ENCODE measurements at regions of chr7 and their contacts with region 1.

Region 1: DNA sequence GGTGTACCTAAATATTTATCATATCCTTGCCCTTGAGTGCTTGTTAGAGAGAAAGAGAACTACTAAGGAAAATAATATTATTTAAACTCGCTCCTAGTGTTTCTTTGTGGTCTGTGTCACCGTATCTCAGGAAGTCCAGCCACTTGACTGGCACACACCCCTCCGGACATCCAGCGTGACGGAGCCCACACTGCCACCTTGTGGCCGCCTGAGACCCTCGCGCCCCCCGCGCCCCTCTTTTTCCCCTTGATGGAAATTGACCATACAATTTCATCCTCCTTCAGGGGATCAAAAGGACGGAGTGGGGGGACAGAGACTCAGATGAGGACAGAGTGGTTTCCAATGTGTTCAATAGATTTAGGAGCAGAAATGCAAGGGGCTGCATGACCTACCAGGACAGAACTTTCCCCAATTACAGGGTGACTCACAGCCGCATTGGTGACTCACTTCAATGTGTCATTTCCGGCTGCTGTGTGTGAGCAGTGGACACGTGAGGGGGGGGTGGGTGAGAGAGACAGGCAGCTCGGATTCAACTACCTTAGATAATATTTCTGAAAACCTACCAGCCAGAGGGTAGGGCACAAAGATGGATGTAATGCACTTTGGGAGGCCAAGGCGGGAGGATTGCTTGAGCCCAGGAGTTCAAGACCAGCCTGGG is 11.4 kb downstream of the SERPINE1 start:
- DNase-seq: peak; percentile 98
- ATAC-seq: peak; percentile 44
- H3K4me3 ChIP-seq: no peak overlapping the region
- H3K27ac ChIP-seq: peak overlapping the region; percentile 70
- H3K4me1 ChIP-seq: peaks cover 22% of the 10 kb centered on the region; the same call in 1 of the 2 replicates
- H3K27me3 ChIP-seq: no peaks in the 10 kb centered on the region
- CTCF ChIP-seq: peak; percentile 60
- POLR2A ChIP-seq: peak; percentile 77
- RAD21 ChIP-seq: peak; percentile 39; the same call in 1 of the 2 replicates

Region 2: DNA sequence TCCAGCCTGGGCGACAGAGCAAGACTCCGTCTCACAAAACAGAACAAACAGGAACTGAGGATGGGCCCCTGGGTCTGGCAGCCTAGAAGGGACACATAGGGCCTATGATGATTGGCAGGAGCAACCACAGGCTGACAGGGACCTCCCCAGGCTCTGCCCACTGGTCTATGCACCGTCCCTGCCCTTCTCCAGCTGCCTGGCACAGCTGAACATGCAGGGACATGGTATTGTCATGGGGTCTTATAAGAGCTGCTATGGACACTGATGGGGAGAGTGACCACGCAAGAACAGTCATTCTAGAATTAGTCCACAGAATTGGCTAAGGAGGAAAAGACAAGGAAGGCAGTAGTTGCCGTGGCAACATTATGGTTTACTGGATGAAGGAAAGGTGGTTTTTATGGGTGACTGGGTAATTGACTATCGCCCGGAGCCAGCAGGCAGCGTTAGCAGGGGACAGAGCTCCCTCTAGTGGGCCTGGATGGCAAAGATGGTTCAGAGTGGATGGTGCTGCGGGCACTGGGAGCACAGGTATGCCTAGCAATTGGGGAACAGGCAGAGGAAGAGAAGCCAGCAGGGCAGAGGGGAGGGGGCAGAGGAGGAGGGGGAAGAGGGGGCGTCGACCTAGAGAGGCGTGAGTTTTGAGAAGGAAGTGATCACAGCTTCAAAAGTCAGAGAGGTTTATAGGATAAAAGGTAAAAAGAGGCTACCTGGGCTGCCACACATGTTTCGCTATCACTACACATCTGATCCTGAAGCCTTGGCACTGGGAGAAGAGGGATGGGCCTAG is 60.8 kb before region 1 on chr7:
- CTCF ChIA-PET with region 1: no interaction called
- POLR2A ChIA-PET with region 1: no interaction called
- dilution Hi-C with region 1: no loop called
- in situ Hi-C with region 1: no loop called
- intact Hi-C with region 1: no loop called
- DNase-seq: peak; percentile 64
- ATAC-seq: peak; percentile 100
- H3K4me3 ChIP-seq: no peak overlapping the region
- H3K27ac ChIP-seq: no peak overlapping the region
- H3K4me1 ChIP-seq: no peaks in the 10 kb centered on the region
- H3K27me3 ChIP-seq: peaks cover 11% of the 10 kb centered on the region
- CTCF ChIP-seq: peak; percentile 88
- POLR2A ChIP-seq: no peak
- RAD21 ChIP-seq: peak; percentile 93

Region 3: DNA sequence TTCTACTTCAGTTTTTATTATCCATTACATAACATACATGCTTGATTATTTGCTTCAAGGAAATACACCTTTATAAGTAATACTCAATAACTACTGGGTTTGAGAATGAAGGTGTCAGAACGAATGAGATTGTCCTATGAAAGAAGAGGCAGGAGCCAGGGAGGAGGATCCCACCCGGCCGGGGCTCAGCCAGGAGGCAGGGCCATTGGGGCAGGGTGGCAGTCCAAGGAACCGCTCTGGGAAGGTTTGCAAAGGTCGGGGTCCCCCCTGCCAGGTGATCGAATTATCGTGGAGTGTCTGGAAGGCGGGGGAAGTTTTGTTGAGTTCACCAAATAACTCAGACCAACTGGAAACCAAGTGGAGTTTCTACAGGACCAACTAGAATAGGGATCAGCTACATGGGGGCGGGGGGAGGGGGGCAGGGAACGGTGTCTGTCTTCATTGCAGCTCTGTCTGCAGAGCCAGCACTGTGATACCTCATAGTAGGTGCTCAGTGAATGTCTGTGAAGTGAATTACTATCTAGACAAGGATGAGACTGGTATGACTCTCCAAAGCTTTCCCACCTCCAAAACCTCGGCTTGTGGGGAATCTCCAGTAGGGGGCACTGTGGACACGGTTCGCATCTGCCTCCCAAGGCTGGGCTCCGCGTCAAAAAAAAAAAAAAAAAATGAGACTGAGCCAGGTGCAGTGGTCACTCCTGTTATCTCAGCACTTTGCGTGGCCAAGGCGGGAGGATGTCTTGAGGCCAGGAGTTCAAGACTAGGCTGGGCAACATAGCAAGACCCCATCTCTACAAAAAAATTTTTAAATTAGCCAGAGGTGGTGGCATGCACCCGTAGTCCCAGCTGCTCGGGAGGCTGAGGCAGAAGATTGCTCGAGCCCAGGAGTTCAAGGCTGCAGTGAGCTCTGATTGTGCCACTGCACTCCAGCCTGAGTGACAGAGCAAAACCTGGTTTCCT is 43.6 kb before region 1 on chr7:
- CTCF ChIA-PET with region 1: interaction called, 8 read pairs
- POLR2A ChIA-PET with region 1: interaction called, 5 read pairs
- dilution Hi-C with region 1: no loop called
- in situ Hi-C with region 1: loop called (anchors 5 kb)
- intact Hi-C with region 1: loop called (anchors 1 kb)
- DNase-seq: peak; percentile 67
- ATAC-seq: peak; percentile 64
- H3K4me3 ChIP-seq: no peak overlapping the region
- H3K27ac ChIP-seq: peak overlapping the region; percentile 77
- H3K4me1 ChIP-seq: peaks cover 14% of the 10 kb centered on the region
- H3K27me3 ChIP-seq: no peaks in the 10 kb centered on the region
- CTCF ChIP-seq: peak; percentile 80
- POLR2A ChIP-seq: no peak
- RAD21 ChIP-seq: peak; percentile 76

Region 4: DNA sequence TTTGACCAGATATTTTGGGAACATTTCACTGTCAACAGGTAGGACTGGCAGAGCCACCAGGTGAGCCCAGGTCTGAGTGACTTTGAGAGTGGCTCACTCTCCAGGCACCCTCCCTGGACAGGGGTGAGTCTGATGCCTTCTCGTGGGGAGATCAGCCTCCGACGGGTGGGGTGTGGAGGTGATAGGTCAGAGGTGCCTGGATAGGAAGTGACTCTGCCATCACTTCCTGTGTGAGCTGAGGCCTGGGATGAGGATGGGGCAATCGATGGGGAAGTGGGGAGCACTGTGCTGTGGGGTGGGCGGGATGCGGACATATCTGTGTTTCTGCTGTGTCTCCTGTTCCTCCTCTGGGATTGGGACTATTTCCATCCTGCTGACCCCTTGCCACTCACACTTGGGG is 148.7 kb after region 1 on chr7:
- CTCF ChIA-PET with region 1: interaction called, 23 read pairs
- POLR2A ChIA-PET with region 1: no interaction called
- dilution Hi-C with region 1: no loop called
- in situ Hi-C with region 1: no loop called
- intact Hi-C with region 1: no loop called
- DNase-seq: no peak
- ATAC-seq: no peak
- H3K4me3 ChIP-seq: no peak overlapping the region
- H3K27ac ChIP-seq: no peak overlapping the region
- H3K4me1 ChIP-seq: no peaks in the 10 kb centered on the region
- H3K27me3 ChIP-seq: peaks cover 43% of the 10 kb centered on the region
- CTCF ChIP-seq: no peak
- POLR2A ChIP-seq: no peak
- RAD21 ChIP-seq: no peak

Region 5: DNA sequence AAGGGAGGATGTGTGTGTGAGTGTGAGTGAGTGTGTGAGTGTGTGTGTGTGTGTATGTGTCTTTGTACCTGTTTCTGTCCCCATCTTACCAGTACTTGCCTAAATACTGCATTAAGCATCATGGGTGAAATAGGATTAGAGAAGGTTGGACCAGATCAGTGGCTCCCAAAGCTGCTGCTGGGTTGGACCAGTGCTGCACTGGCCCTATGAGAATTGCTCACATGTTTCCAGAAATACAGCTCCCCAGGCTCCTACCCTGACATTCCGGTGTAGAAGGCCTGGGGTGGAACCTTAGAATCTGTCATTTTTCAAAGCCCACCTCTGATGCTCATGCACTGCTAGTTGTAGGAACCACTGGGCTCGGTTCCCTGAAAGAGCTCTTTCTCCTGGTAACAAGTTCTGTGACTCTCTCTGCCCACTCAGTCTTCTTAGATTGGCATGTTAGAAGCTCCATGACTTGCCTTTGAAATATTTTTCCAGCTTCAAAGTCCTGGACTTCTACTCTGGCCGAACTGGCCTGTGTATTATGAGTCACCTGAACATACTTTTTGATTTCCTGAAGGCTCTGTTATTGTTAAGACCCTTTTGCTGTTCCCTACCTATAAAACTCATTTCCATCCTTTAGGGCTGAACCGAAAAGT is 903.8 kb after region 1 on chr7:
- CTCF ChIA-PET with region 1: no interaction called
- POLR2A ChIA-PET with region 1: no interaction called
- dilution Hi-C with region 1: no loop called
- in situ Hi-C with region 1: no loop called
- intact Hi-C with region 1: no loop called
- DNase-seq: peak; percentile 86
- ATAC-seq: peak; percentile 42
- H3K4me3 ChIP-seq: no peak overlapping the region
- H3K27ac ChIP-seq: no peak overlapping the region; the same call in 1 of the 2 replicates
- H3K4me1 ChIP-seq: peaks cover 22% of the 10 kb centered on the region
- H3K27me3 ChIP-seq: no peaks in the 10 kb centered on the region
- CTCF ChIP-seq: no peak
- POLR2A ChIP-seq: no peak
- RAD21 ChIP-seq: no peak